ENCODE measurements at regions of chr19 and their contacts with region 1.

Region 1: DNA sequence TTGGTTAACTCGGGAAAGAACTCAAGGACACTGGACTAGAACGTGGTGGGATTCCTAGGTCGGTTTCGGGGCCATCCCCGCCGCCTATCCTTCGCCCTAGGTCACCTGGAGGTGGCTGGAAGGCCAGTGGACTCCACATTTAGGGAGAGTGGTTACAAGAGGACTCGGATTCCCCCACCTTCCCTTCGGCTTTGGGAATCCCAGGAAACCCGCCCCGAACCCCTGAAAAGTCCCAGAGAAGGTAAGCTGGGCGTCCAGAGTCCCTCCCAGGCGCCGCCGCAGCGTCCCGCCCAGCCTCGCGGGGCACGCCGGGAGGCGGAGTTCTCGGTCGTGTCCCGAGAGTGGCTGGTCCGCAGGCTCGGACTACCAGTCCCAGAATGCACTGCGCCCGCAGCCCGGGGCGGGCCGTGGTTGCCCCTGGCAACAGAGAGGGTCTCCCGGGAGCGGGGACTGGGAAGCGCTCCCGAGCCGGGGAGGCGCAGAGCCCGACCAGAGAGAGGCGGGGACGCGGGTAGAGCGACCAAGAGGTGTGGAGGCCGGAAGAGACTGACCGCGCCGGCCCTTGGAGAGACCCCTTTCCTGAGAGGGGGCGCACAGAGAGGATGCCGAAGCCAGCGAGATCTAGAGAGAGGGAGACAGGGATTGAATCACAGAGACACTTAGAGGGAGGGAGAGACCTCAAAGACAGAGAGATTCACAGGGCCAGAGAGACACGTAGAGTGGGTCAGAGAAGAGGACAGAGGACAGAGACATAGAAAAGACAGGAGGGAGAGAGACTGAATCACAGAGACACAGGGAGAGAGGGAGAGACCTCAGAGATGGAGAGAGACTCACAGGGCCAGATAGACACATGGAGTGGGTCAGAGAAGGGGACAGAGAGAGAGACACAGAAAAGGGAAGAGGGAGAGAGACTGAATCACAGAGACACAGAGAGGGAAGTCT is 2.6 kb upstream of the PRKCG start:
- DNase-seq: peak; percentile 67
- H3K4me3 ChIP-seq: peak overlapping the region; percentile 69
- H3K27ac ChIP-seq: no peak overlapping the region
- H3K27me3 ChIP-seq: peaks cover 33% of the 10 kb centered on the region
- CTCF ChIP-seq: no peak

Region 2: GRCh38 chr19:53867225-53868090 is 12.0 kb before region 1 on chr19 and contains the start of gene MYADM:
- CTCF ChIA-PET with region 1: no interaction called
- POLR2A ChIA-PET with region 1: interaction called, 10 read pairs
- DNase-seq: peak; percentile 96
- H3K4me3 ChIP-seq: peak within 1 kb of the TSS; percentile 93
- H3K27ac ChIP-seq: peak within 1 kb of the TSS; percentile 97
- H3K27me3 ChIP-seq: no peaks in the 10 kb centered on the region
- CTCF ChIP-seq: no peak
- polyA plus RNA-seq, gene MYADM: 39.3 and 71.0 TPM in 2 replicates